Lower leg skin (tissue), 4 donors: ENCODE measurements at regions of chr9 and their contacts with region 1.

Region 1: DNA sequence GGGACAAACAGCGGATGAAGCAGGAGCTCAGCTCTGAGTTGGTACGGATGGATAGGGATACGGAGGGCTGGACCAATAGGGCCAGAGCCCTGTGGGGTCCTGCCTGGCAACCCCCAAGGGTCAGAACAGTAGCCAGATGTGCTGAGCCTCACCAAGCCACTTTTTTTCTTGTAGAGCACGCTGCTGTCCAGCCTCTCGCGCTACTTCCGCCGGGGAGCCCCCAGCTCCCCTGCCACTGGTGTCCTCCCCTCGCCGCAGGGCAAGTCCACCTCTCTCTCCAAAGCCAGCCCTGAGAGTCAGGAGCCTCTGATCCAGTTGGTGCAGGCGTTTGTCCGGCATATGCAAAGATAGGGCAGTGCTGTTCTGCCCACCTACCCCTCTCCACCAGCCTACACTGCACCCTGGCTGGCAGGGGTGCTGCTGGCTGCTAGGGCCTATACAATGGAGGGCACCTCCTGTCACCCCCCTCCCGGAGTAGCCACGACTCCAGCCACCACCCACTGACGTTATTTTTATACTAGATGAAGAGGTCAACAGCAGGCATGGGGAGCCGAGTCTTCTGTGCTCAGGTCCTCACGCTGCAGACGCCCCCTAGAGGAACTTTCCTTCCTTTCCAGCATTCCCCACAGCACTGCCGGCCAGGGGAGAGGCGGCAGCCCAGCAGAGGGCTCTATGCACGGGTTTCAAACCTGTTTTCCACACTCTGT is 21.6 kb downstream of the SH3GLB2 start:
- DNase-seq: no peak
- H3K4me3 ChIP-seq: no peak overlapping the region
- CTCF ChIP-seq: peak in 1 of 3 donors; percentile 63
- POLR2A ChIP-seq: no peak

Region 2: GRCh38 chr9:127489471-127490115 is 1516.9 kb before region 1 on chr9:
- intact Hi-C with region 1: loop called (anchors 10 kb)
- DNase-seq: no peak
- H3K4me3 ChIP-seq: no peak overlapping the region
- CTCF ChIP-seq: no peak
- POLR2A ChIP-seq: no peak